B cell (primary cell): ENCODE measurements at regions of chr19 and their contacts with region 1.

Region 1: GRCh38 chr19:12983542-12984142 is 11.6 kb upstream of the NFIX start:
- DNase-seq: peak; percentile 93
- ATAC-seq: peak; percentile 77
- H3K4me3 ChIP-seq: peak overlapping the region in 4 of 5 experiments; percentile 24 to 62 (median 36)
- H3K4me3 Mint-ChIP-seq: no peak overlapping the region
- H3K27ac ChIP-seq: no peak overlapping the region
- H3K27ac Mint-ChIP-seq: no peak overlapping the region
- H3K4me1 ChIP-seq: peaks cover 30 to 43% of the 10 kb centered on the region in 2 donors
- H3K4me1 Mint-ChIP-seq: peaks cover 15% of the 10 kb centered on the region
- H3K27me3 ChIP-seq: peaks cover 0 to 10% (median 2%) of the 10 kb centered on the region in 4 experiments
- H3K27me3 Mint-ChIP-seq: peaks cover 4% of the 10 kb centered on the region
- CTCF ChIP-seq: peak; percentile 91

Region 2: GRCh38 chr19:13002166-13002898 is 18.7 kb after region 1 on chr19:
- CTCF ChIA-PET with region 1: no interaction called
- POLR2A ChIA-PET with region 1: no interaction called
- intact Hi-C with region 1: no loop called
- DNase-seq: peak; percentile 3
- ATAC-seq: no peak
- H3K4me3 ChIP-seq: no peak overlapping the region
- H3K4me3 Mint-ChIP-seq: no peak overlapping the region
- H3K27ac ChIP-seq: no peak overlapping the region
- H3K27ac Mint-ChIP-seq: no peak overlapping the region
- H3K4me1 ChIP-seq: no peaks in the 10 kb centered on the region
- H3K4me1 Mint-ChIP-seq: peaks cover 2% of the 10 kb centered on the region
- H3K27me3 ChIP-seq: peaks cover 0 to under 1% (median 0%) of the 10 kb centered on the region in 4 experiments
- H3K27me3 Mint-ChIP-seq: peaks cover 25% of the 10 kb centered on the region
- CTCF ChIP-seq: no peak

Region 3: DNA sequence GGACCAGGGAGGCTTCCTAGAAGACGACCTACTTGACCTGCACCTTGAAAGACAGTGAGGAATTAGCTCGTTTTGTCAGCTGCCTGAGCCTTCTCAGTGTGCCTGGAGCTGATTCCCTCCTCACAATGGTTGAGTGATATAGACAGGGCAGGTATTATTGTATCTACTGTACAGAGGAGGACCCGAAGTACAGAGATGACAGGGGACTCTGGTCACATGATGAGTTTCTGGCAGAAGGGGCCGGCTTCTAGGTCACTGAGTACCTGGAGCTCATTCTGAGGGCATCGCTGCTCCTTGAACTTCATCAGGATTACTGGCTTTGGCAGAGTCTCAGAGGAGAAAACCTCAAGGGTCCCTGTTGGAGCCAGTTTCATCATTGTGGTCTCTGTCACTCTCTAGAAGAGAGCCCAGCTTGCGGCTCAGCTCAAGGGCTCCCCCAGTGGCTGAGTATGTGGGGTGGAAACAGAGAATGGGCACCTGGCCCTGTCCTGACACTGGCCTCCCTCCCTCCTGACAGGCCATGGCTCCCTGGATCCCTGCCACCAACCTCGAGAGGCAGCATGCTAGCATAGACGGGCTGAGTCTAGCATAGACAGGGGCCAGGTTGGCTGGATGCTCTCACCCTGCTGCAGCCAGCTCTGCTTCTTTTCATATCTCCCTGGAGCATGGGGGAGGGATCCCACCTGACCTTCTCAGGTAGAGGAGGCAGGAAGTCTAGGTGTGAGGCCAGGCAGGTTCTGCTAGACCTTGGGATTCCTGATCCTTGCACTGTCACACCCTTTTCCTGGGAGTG is 50.4 kb after region 1 on chr19:
- CTCF ChIA-PET with region 1: interaction called, 27 read pairs
- POLR2A ChIA-PET with region 1: no interaction called
- intact Hi-C with region 1: loop called (anchors 2 kb)
- DNase-seq: peak; percentile 56
- ATAC-seq: peak; percentile 83
- H3K4me3 ChIP-seq: no peak overlapping the region
- H3K4me3 Mint-ChIP-seq: no peak overlapping the region
- H3K27ac ChIP-seq: no peak overlapping the region
- H3K27ac Mint-ChIP-seq: no peak overlapping the region
- H3K4me1 ChIP-seq: no peaks in the 10 kb centered on the region
- H3K4me1 Mint-ChIP-seq: peaks cover 1% of the 10 kb centered on the region
- H3K27me3 ChIP-seq: peaks cover 0 to 10% (median 4%) of the 10 kb centered on the region in 4 experiments
- H3K27me3 Mint-ChIP-seq: peaks cover 17% of the 10 kb centered on the region
- CTCF ChIP-seq: peak; percentile 73